ENCODE measurements at regions of chr5 and their contacts with region 1.

Region 1: DNA sequence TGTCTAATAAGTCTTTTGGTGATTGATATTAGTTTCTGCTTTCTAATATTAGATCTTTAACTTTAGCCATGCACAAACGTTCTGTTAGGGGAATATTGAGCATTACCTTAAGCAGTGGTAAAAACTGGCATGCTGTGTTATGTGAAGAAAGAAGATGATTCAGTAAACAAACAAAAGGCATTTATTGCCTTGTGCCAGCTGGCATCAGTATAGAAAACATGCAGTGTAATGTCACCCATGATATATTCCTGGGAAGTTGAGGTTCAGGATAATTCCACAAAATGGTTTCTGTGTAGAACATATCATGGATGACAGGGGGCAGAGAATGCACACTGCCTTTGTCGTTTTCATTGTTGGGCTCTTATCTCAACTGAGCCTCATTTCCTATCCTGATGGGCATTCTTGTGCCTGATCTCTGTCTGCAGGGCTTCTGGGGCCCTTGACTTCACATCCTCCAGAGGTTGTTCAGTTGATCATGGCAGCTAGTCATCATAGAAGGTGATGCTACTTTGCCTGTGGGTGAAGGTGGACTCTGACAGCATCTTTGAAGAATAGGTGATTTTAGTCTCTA is 24.2 kb downstream of the LRRTM2 start:
- DNase-seq: peak; percentile 41
- H3K4me3 ChIP-seq: no peak overlapping the region
- H3K27ac ChIP-seq: no peak overlapping the region
- H3K4me1 ChIP-seq: peaks cover 24% of the 10 kb centered on the region
- H3K27me3 ChIP-seq: no peaks in the 10 kb centered on the region
- CTCF ChIP-seq: no peak
- POLR2A ChIP-seq: no peak

Region 2: DNA sequence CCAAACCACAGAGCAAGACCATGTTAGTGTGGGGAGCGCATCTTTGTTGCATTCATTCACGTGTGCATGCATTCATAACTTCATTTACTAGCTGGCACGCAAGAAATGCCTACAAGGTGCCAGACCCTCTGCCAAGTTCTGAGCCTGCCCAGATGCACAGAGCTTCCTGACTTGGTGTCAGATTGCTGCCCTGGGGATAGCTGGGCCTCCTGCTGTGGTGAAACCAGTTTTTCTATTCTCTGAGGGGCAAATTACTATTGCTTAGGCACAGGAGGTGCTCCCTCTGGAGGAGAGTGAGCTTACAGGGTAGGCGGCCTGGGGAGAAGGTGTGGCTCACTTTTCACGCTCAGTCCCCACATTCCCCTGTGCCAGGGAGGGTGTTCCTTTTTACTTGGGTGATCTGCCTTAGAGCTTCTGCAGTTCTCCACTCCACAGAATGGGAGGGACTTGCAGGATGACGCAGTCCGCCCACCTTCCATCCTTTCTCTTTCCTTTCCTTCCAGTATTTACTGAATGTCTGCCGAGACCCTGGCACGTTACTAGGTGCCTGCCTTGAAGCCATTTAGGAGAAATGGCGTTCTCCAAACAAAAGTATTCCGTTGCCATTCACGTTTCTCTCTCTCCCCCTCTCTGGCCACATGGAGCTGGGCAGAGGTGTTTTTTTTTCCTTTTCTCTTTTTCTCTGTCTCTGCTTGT is 125.7 kb before region 1 on chr5:
- CTCF ChIA-PET with region 1: no interaction called
- POLR2A ChIA-PET with region 1: no interaction called
- dilution Hi-C with region 1: no loop called
- intact Hi-C with region 1: no loop called
- DNase-seq: peak; percentile 42
- H3K4me3 ChIP-seq: no peak overlapping the region
- H3K27ac ChIP-seq: no peak overlapping the region
- H3K4me1 ChIP-seq: no peaks in the 10 kb centered on the region
- H3K27me3 ChIP-seq: peaks cover 5% of the 10 kb centered on the region in 2 experiments
- CTCF ChIP-seq: peak in 1 of 2 donors; percentile 40
- POLR2A ChIP-seq: no peak

Region 3: GRCh38 chr5:138867011-138867410 is 16.1 kb after region 1 on chr5:
- CTCF ChIA-PET with region 1: interaction called, 6 read pairs
- POLR2A ChIA-PET with region 1: no interaction called
- dilution Hi-C with region 1: no loop called
- intact Hi-C with region 1: loop called (anchors 2 kb)
- DNase-seq: peak; percentile 39
- H3K4me3 ChIP-seq: no peak overlapping the region
- H3K27ac ChIP-seq: no peak overlapping the region
- H3K4me1 ChIP-seq: peaks cover 9% of the 10 kb centered on the region
- H3K27me3 ChIP-seq: no peaks in the 10 kb centered on the region
- CTCF ChIP-seq: no peak
- POLR2A ChIP-seq: no peak

Region 4: GRCh38 chr5:138878437-138879235 is 27.7 kb after region 1 on chr5:
- CTCF ChIA-PET with region 1: interaction called, 6 read pairs
- POLR2A ChIA-PET with region 1: interaction called, 16 read pairs
- dilution Hi-C with region 1: no loop called
- intact Hi-C with region 1: no loop called
- DNase-seq: no peak
- H3K4me3 ChIP-seq: no peak overlapping the region
- H3K27ac ChIP-seq: no peak overlapping the region
- H3K4me1 ChIP-seq: peaks cover 8% of the 10 kb centered on the region
- H3K27me3 ChIP-seq: no peaks in the 10 kb centered on the region
- CTCF ChIP-seq: no peak
- POLR2A ChIP-seq: no peak

Measured in endothelial cell of umbilical vein (primary cell).